T-cell (primary cell): ENCODE measurements at regions of chr10 and their contacts with region 1.

Region 1: DNA sequence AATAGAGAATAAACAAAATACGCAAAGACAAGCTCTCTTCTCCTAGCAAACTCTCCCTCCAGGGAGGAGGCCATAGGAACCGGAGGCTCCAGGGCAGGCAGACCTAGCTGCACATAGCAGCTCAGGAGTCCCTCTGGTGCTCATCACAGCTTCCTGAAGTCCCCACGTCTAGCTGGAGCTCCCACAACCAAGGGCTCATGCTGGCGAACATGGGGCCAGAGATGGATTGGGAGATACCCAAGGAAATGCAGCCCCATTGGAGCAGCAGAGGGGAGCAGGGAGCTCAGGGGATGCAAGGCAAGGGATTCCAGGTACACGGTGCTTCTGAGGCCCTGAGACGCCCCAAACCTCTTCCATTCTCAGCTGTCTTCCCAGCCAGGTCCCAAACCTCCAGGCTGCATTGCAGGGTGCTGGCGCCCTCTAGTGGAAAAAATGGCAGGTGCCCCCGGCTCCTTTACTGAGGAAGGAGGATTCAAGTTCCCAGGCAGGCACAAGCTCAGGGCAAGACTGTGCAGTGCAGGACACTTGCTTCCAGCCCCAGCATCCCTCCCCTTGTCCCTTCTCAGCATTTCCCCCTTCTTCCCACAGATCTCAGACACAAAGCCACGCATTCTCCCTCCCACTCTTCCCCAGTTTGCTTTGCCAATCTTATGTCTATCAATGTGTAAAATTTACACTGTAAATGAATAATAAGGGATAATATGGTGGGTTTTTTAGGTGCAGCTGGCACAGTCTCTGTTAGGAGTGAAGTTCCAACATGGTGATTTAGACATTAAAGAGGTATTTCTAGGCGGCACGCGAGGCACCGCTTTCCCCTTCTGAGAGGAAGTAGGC is 46.2 kb downstream of the GPAM start:
- DNase-seq: peak in 33 of 35 experiments; percentile 6 to 62 (median 41)
- ATAC-seq: peak in 3 of 4 experiments; percentile 39 to 44 (median 41)
- H3K4me3 ChIP-seq: no peak overlapping the region
- H3K4me3 Mint-ChIP-seq: no peak overlapping the region
- H3K27ac ChIP-seq: no peak overlapping the region
- H3K27ac Mint-ChIP-seq: no peak overlapping the region
- H3K4me1 ChIP-seq: peaks cover 0 to 4% of the 10 kb centered on the region in 2 experiments
- H3K4me1 Mint-ChIP-seq: peaks cover 0 to 3% (median 0%) of the 10 kb centered on the region in 3 donors
- H3K27me3 ChIP-seq: peaks cover 0 to 14% of the 10 kb centered on the region in 2 experiments
- H3K27me3 Mint-ChIP-seq: no peaks in the 10 kb centered on the region

Region 2: GRCh38 chr10:112122827-112123226 is 14.5 kb before region 1 on chr10:
- CTCF ChIA-PET with region 1: interaction called, 4 to 14 read pairs
- POLR2A ChIA-PET with region 1: no interaction called
- DNase-seq: no peak
- ATAC-seq: no peak
- H3K4me3 ChIP-seq: no peak overlapping the region
- H3K4me3 Mint-ChIP-seq: no peak overlapping the region
- H3K27ac ChIP-seq: no peak overlapping the region
- H3K27ac Mint-ChIP-seq: no peak overlapping the region
- H3K4me1 ChIP-seq: no peaks in the 10 kb centered on the region
- H3K4me1 Mint-ChIP-seq: no peaks in the 10 kb centered on the region
- H3K27me3 ChIP-seq: peaks cover 0 to 3% of the 10 kb centered on the region in 2 experiments
- H3K27me3 Mint-ChIP-seq: peaks cover 5 to 9% of the 10 kb centered on the region in 2 donors